ENCODE measurements at regions of chr1 and their contacts with region 1.

Region 1: DNA sequence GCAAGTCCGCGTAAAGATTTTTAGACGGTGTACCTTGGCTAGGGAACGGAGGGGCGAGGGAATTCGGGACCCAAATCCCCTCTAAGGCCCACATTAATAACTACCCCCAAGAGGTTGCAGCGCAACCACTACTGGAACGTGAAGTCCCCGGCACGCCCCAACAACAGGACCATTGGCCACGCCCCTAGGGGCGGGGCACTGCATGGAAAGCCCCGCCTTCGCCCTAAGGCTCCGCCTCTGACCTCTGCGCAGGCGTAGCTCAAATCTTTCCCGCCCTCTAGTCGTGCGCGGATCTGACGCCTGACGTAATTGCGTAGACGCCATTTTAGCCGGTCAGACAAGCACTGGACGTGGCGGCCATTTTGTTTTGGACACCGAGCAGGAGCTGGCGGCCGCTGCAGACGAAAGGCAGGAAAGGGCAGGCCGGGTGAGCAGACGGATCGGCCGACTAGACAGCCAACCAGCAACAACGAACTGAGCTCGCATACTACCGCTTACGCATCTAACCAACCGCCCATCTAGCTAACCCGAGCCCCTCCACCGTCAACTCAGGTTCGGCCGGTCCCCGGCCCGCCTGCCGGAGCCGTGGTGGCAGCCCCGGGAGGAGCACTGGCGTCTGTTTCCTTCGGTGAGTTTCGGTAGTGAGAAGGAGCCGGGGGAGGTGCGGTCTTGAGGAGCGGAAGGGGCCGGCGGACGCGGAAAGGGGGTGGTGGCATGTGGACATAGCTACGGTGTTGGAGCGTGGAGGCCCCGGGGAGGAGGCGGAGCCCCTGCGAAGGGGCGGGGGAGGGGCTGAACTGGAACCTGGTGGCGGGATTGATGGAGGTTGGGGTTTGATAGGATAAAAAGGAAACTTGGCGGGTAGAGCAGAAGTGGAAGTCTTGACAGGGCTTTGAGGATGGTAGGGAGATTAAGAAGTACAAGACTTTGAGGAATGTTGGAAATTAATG is at the start of gene CHTOP:
- H3K4me3 ChIP-seq: peak within 1 kb of the TSS; percentile 79
- H3K27ac ChIP-seq: peak within 1 kb of the TSS; percentile 99
- H3K4me1 ChIP-seq: no peaks in the 10 kb centered on the region
- CTCF ChIP-seq: peak; percentile 30; the same call in 1 of the 2 replicates

Region 2: GRCh38 chr1:153566440-153567379 is 67.3 kb before region 1 on chr1:
- CTCF ChIA-PET with region 1: interaction called, 37 read pairs
- POLR2A ChIA-PET with region 1: interaction called, 22 read pairs
- H3K4me3 ChIP-seq: no peak overlapping the region
- H3K27ac ChIP-seq: peak overlapping the region; percentile 77
- H3K4me1 ChIP-seq: peaks cover 7% of the 10 kb centered on the region
- CTCF ChIP-seq: no peak

Region 3: GRCh38 chr1:153602749-153603148 is 31.2 kb before region 1 on chr1:
- CTCF ChIA-PET with region 1: no interaction called
- POLR2A ChIA-PET with region 1: interaction called, 11 read pairs
- H3K4me3 ChIP-seq: no peak overlapping the region
- H3K27ac ChIP-seq: no peak overlapping the region
- H3K4me1 ChIP-seq: no peaks in the 10 kb centered on the region
- CTCF ChIP-seq: no peak

Region 4: DNA sequence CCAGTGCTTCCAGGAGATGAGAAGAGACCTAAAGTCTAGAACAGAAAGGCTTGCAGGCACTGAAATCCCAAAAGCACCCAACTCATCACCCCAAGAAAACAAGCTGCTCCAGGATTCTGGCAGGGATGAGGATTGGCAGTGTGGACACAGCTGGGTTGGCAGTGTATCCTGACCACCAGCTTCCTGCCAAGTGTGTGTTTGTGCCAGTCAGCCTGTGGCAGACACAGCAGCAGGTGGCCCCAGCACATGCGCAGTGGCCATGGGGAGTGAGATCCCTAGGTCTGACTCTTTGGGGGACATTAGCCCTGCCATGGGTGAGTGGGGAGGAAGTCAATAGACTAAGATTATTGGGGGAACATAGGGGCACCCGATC is 15.9 kb after region 1 on chr1:
- CTCF ChIA-PET with region 1: interaction called, 3 read pairs
- POLR2A ChIA-PET with region 1: interaction called, 25 read pairs
- H3K4me3 ChIP-seq: no peak overlapping the region
- H3K27ac ChIP-seq: no peak overlapping the region
- H3K4me1 ChIP-seq: no peaks in the 10 kb centered on the region
- CTCF ChIP-seq: no peak

Region 5: DNA sequence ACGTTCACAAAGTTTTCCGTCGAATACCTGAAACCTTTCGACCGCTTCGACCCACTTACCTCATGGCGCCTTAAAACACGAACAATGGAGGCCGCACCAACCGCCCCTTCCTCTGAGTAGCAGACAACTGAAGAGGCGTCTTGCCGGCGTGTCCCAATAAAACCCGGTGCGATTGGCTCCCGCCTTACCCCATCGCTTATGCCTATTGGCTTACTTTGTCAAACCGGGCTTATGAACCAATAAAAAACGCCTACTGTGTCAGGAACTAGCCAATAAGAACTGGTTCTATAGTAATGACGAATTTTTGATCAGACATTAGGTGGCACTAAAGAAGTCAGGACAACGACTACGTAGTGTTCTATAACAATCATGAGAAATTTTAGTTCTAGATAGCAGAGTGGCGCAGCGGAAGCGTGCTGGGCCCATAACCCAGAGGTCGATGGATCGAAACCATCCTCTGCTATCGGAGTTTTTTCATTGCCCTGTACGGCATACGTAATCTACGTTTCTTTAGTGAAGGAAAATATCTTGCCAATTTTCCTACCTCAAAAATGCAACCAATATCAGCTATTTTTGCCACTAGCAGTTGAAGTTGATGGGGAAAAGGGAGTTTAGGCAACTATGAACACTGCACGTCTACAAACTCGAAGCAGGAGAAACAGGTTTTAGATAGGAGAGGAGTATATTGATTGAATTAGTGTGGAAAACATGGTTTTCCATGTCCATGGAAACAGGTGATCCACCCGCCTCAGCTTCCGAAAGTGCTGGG is 37.1 kb after region 1 on chr1 and contains the start of gene ILF2:
- CTCF ChIA-PET with region 1: interaction called, 4 read pairs
- POLR2A ChIA-PET with region 1: interaction called, 12 read pairs
- H3K4me3 ChIP-seq: peak within 1 kb of the TSS; percentile 85
- H3K27ac ChIP-seq: peak within 1 kb of the TSS; percentile 77
- H3K4me1 ChIP-seq: no peaks in the 10 kb centered on the region
- CTCF ChIP-seq: peak; percentile 90

Measured in HEK293 (cell line).